ENCODE measurements at regions of chr20 and their contacts with region 1.

Region 1: DNA sequence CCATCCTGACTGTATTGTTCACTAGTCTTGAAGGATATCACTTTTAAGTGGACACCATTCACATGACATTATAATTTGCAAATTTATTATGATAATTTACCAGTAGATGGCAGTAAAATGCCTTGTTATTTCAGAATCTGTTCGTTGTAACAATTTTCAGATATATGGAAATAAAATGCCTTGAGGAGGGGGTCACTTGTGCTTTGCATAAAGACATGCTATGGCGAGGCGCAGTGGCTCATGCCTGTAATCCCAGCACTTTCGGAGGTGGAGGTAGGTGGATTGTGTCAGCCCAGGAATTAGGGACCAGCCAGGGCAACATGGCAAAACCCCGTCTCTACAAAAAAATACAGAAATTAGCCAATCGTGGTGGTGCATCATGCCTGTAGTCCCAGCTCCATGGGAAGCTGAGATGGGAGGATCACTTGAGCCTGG is 9.0 kb upstream of the NCOA6 start:
- DNase-seq: peak; percentile 72
- H3K4me3 ChIP-seq: no peak overlapping the region
- H3K27ac ChIP-seq: no peak overlapping the region
- H3K4me1 ChIP-seq: no peaks in the 10 kb centered on the region
- H3K27me3 ChIP-seq: no peaks in the 10 kb centered on the region
- CTCF ChIP-seq: peak; percentile 54

Region 2: GRCh38 chr20:34713194-34713943 is 121.1 kb before region 1 on chr20:
- CTCF ChIA-PET with region 1: interaction called, 14 read pairs
- POLR2A ChIA-PET with region 1: no interaction called
- intact Hi-C with region 1: no loop called
- DNase-seq: peak; percentile 90
- H3K4me3 ChIP-seq: no peak overlapping the region
- H3K27ac ChIP-seq: no peak overlapping the region
- H3K4me1 ChIP-seq: peaks cover 14% of the 10 kb centered on the region
- H3K27me3 ChIP-seq: no peaks in the 10 kb centered on the region
- CTCF ChIP-seq: no peak

Region 3: DNA sequence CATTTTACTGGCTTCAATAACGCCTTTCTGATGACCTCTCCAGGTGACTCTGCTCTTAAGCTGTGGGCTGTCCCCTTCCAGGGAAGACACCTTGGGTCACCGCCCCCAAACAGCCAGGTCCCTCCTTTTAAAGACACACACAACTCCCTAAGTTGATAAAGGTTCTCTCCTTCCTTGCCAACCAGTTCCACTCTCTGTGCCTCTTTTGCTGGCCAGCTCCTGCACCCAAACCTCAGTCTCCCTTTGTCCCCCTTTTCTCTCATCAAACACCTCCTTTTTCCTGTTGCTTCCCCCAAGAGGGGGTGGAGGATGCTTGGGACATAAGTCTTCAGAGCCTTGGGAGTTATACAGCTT is 10.0 kb before region 1 on chr20:
- CTCF ChIA-PET with region 1: no interaction called
- POLR2A ChIA-PET with region 1: no interaction called
- intact Hi-C with region 1: no loop called
- DNase-seq: peak; percentile 57
- H3K4me3 ChIP-seq: peak overlapping the region; percentile 70
- H3K27ac ChIP-seq: peak overlapping the region; percentile 88
- H3K4me1 ChIP-seq: peaks cover 5% of the 10 kb centered on the region
- H3K27me3 ChIP-seq: no peaks in the 10 kb centered on the region
- CTCF ChIP-seq: no peak

Region 4: GRCh38 chr20:34955232-34956040 is 121.0 kb after region 1 on chr20 and contains the starts of genes GSS and MYH7B:
- CTCF ChIA-PET with region 1: interaction called, 11 read pairs
- POLR2A ChIA-PET with region 1: no interaction called
- intact Hi-C with region 1: loop called (anchors 5 kb)
- DNase-seq: peak; percentile 96
- H3K4me3 ChIP-seq: peak within 1 kb of the TSS; percentile 70
- H3K27ac ChIP-seq: peak within 1 kb of the TSS; percentile 87
- H3K4me1 ChIP-seq: peaks cover 8% of the 10 kb centered on the region
- H3K27me3 ChIP-seq: no peaks in the 10 kb centered on the region
- CTCF ChIP-seq: peak; percentile 56
- total RNA-seq, gene GSS: 53.5 and 63.1 TPM in 2 replicates
- total RNA-seq, gene MYH7B: 0.34 and 1.1 TPM in 2 replicates

Region 5: GRCh38 chr20:34964486-34964885 is 130.0 kb after region 1 on chr20:
- CTCF ChIA-PET with region 1: no interaction called
- POLR2A ChIA-PET with region 1: no interaction called
- intact Hi-C with region 1: loop called (anchors 5 kb)
- DNase-seq: no peak
- H3K4me3 ChIP-seq: no peak overlapping the region
- H3K27ac ChIP-seq: no peak overlapping the region
- H3K4me1 ChIP-seq: no peaks in the 10 kb centered on the region
- H3K27me3 ChIP-seq: peaks cover 4% of the 10 kb centered on the region
- CTCF ChIP-seq: no peak

Region 6: DNA sequence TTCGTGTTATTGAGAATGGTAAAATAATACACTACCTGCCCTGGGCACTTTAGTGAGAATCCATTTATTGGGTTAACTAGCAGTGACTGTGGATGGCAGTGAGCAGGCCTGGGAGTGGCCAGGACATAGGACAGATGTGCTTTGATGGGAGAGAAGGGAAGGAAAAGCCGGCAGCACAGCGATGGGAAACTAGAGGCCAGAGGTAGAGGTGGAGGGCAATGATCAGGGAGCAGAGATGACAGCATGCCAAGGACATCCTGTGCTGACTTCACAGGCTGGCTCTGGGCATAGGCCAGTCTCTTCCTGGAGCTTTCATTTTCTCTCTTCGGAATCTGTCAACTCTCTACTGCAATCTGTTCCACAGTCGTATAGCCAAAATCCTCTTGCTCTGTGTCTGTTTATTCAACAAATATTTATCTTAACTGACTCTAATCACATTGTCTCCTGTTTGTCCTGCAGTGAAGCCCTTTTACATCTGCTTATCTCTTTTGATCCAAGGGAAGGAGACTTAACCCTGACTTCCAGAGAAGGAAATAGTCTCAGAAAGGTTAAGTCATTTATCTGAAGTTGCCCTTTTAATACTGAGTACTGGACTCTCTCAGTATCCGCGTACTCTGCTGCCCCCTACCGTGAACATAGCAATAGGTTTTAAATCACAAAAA is 373.6 kb after region 1 on chr20:
- CTCF ChIA-PET with region 1: no interaction called
- POLR2A ChIA-PET with region 1: no interaction called
- intact Hi-C with region 1: loop called (anchors 2 kb)
- DNase-seq: peak; percentile 77
- H3K4me3 ChIP-seq: no peak overlapping the region
- H3K27ac ChIP-seq: no peak overlapping the region
- H3K4me1 ChIP-seq: no peaks in the 10 kb centered on the region
- H3K27me3 ChIP-seq: no peaks in the 10 kb centered on the region
- CTCF ChIP-seq: peak; percentile 78

Region 7: GRCh38 chr20:35269055-35269781 is 434.7 kb after region 1 on chr20:
- CTCF ChIA-PET with region 1: no interaction called
- POLR2A ChIA-PET with region 1: no interaction called
- intact Hi-C with region 1: loop called (anchors 5 kb)
- DNase-seq: peak; percentile 62
- H3K4me3 ChIP-seq: no peak overlapping the region
- H3K27ac ChIP-seq: no peak overlapping the region
- H3K4me1 ChIP-seq: no peaks in the 10 kb centered on the region
- H3K27me3 ChIP-seq: no peaks in the 10 kb centered on the region
- CTCF ChIP-seq: peak; percentile 87

Region 8: DNA sequence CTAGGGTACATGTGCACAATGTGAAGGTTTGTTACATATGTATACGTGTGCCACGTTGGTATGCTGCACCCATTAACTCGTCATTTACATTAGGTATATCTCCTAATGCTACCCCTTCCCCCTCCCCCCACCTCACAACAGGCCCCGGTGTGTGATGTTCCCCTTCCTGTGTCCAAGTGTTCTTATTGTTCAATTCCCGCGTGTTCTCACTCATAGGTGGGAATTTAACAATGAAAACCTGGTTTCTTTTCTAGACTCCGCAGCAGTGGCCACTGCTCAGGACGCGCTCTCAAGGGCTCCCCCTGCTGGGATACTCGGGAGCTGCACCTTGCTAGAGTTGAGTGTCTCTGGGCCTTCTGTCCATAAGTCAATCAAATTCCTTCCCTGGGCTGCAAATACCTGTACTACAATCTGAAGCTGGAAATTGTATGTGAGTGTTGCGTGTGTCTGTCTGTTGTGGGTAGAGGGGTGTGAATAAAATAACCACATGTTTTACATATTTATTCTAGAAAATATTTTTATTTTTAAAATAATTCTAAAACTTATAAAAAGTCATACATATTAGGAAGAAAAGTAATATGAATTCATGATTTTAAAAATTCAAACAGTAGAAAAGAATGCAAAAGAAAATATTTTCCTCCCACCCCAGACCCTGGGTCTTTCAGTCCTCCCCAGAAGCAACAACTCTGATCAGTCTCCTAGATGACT is 612.8 kb after region 1 on chr20:
- CTCF ChIA-PET with region 1: no interaction called
- POLR2A ChIA-PET with region 1: no interaction called
- intact Hi-C with region 1: loop called (anchors 5 kb)
- DNase-seq: peak; percentile 89
- H3K4me3 ChIP-seq: peak overlapping the region; percentile 46
- H3K27ac ChIP-seq: no peak overlapping the region
- H3K4me1 ChIP-seq: peaks cover 8% of the 10 kb centered on the region
- H3K27me3 ChIP-seq: no peaks in the 10 kb centered on the region
- CTCF ChIP-seq: peak; percentile 91